ENCODE measurements at regions of chr12 and their contacts with region 1.

Region 1: DNA sequence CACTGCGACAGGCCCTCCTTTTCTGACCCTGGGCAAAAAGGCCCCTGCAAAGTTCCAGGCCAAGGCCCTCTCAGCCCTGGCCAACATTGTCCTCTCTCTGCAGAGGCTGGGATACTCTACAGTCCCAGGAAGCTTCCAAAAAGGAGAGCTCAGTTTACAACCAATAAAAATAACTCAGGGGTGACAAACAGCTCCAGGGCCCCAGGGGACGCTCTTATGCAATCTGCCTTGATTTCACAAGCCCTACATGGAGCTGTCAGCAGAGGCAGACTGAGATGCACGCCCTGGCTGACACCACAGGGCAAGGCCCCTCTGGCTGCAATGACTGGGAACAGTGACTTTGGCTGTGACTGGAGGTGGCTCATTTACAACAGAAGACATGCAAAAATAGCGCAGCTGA is 129.0 kb upstream of the MED13L start:
- DNase-seq: no peak
- CTCF ChIP-seq: no peak

Region 2: GRCh38 chr12:116384691-116385485 is 21.6 kb before region 1 on chr12:
- CTCF ChIA-PET with region 1: interaction called, 3 read pairs
- POLR2A ChIA-PET with region 1: interaction called, 14 read pairs
- DNase-seq: peak; percentile 78
- CTCF ChIP-seq: no peak